Activated CD4-positive, alpha-beta T cell treated with anti-CD3 and anti-CD28 coated beads, Interleukin-2, amount 10 ng/mL, durations not matched to agents 24 days and 14 days (primary cell): ENCODE measurements at regions of chr3 and their contacts with region 1.

Region 1: GRCh38 chr3:194654443-194654842 is 17.5 kb downstream of the LSG1 start:
- DNase-seq: peak; percentile 63
- H3K4me3 Mint-ChIP-seq: peak overlapping the region; percentile 49
- H3K27ac Mint-ChIP-seq: peak overlapping the region; percentile 63
- H3K4me1 Mint-ChIP-seq: peaks cover 17% of the 10 kb centered on the region
- H3K27me3 Mint-ChIP-seq: no peaks in the 10 kb centered on the region

Region 2: GRCh38 chr3:194671900-194672808 is 17.7 kb after region 1 on chr3 and contains the start of gene LSG1:
- intact Hi-C with region 1: loop called (anchors 1 kb)
- DNase-seq: peak; percentile 97
- H3K4me3 Mint-ChIP-seq: peak within 1 kb of the TSS; percentile 99
- H3K27ac Mint-ChIP-seq: peak within 1 kb of the TSS; percentile 97
- H3K4me1 Mint-ChIP-seq: peaks cover 48% of the 10 kb centered on the region
- H3K27me3 Mint-ChIP-seq: no peaks in the 10 kb centered on the region
- total RNA-seq, gene LSG1: 59.0 and 60.2 TPM in 2 replicates